ENCODE measurements at regions of chr12 and their contacts with region 1.

Region 1: DNA sequence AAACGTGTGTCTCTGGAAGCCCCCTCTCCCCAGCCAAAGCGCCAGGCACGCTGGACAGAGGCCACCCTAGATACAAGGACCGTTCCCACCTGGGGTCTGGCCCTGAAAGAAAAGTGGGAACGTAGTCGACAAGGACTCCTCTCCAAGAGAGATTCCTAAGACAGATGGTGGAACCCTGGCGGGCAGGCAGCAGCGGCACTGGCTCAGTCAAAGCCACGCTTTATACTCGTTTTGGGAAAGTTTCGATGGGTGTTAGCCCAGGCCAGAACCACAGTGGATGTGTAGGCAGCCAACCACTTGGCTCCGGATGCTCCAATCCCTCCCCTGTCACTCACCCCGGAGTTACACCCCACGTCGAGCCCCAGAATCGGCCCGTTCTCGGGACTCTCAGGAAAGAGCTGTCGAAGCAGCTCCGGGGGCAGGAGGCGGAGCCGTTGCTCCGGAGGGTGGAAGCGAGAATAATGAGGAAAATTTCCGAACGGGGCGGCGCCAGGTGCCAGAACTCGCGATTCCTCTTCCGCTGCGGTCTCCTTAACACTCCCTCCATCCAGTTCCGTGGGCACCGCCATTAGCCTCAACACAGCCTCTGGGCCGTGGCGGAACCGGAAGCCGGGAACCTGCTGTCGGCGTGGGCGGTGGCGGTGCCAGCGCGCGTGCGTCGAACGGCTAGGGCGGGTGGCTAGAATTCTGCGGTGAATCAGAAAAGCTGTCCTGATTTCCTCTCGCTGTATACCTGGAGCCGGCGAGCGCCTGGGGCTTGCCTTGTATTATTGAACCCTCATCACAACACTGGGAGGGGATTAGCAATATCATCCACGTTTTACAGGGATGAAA is at the start of gene BCDIN3D:
- DNase-seq: peak; percentile 88
- ATAC-seq: peak; percentile 90
- H3K4me3 Mint-ChIP-seq: peak within 1 kb of the TSS; percentile 93
- H3K27ac Mint-ChIP-seq: peak within 1 kb of the TSS; percentile 90
- H3K4me1 Mint-ChIP-seq: peaks cover 34% of the 10 kb centered on the region
- H3K27me3 Mint-ChIP-seq: no peaks in the 10 kb centered on the region
- CTCF ChIP-seq: no peak
- total RNA-seq, gene BCDIN3D: 10.4 and 12.0 TPM in 2 replicates

Region 2: DNA sequence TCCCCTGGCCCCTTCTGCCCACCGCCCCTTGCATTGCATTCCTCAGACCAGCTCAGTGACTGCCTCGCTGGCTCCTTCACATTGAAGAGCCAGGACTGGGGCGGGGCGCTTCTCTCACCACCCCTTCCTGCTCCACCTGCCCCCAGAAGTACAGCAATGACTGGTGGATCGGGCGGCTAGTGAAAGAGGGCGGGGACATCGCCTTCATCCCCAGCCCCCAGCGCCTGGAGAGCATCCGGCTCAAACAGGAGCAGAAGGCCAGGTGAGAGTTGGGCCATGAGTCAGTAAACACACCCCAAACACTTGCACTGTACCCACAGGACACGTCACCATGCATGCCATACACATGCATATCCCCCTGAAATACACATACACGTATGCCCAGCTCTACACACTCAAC is 1018.6 kb before region 1 on chr12:
- CTCF ChIA-PET with region 1: no interaction called
- POLR2A ChIA-PET with region 1: no interaction called
- intact Hi-C with region 1: no loop called
- DNase-seq: no peak
- ATAC-seq: peak; percentile 42
- H3K4me3 Mint-ChIP-seq: no peak overlapping the region
- H3K27ac Mint-ChIP-seq: no peak overlapping the region
- H3K4me1 Mint-ChIP-seq: peaks cover under 1% of the 10 kb centered on the region
- H3K27me3 Mint-ChIP-seq: no peaks in the 10 kb centered on the region
- CTCF ChIP-seq: no peak

Region 3: GRCh38 chr12:49636979-49637755 is 205.6 kb before region 1 on chr12:
- CTCF ChIA-PET with region 1: interaction called, 8 read pairs
- POLR2A ChIA-PET with region 1: no interaction called
- intact Hi-C with region 1: loop called (anchors 2 kb)
- DNase-seq: peak; percentile 22
- ATAC-seq: peak; percentile 94
- H3K4me3 Mint-ChIP-seq: no peak overlapping the region
- H3K27ac Mint-ChIP-seq: peak overlapping the region; percentile 22
- H3K4me1 Mint-ChIP-seq: peaks cover 27% of the 10 kb centered on the region
- H3K27me3 Mint-ChIP-seq: no peaks in the 10 kb centered on the region
- CTCF ChIP-seq: no peak

Region 4: DNA sequence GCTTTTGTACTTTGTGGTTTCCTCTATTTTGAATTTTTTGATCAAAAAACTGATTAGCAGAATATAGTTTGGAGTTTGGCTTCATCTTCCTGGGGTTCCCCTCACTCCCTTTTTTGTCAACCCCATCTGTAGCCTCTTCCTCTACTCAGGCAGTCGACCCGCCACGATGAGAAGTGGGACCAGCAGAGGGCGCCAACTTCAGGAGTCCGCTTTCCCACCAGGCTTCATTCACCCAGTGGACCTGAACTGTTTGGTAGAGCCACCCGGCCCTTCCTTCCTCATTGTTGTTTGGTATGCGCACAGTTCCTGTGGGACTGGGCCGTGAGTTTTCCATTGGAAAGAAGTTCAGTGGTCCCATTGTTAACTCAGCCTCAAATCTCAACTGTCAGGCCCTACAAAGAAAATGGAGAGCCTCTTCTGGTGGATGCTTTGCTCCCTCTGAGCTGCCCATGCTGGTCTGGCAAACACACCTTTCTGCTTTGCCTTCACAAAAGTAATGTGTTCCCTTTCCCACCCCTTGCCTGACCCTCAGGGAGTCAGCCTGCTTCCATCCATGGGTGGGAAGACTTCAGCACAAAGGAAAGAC is 79.6 kb before region 1 on chr12:
- CTCF ChIA-PET with region 1: interaction called, 21 read pairs
- POLR2A ChIA-PET with region 1: interaction called, 3 read pairs
- intact Hi-C with region 1: loop called (anchors 1 kb)
- DNase-seq: peak; percentile 59
- ATAC-seq: peak; percentile 83
- H3K4me3 Mint-ChIP-seq: no peak overlapping the region
- H3K27ac Mint-ChIP-seq: peak overlapping the region; percentile 79
- H3K4me1 Mint-ChIP-seq: peaks cover 25% of the 10 kb centered on the region
- H3K27me3 Mint-ChIP-seq: no peaks in the 10 kb centered on the region
- CTCF ChIP-seq: no peak

Region 5: GRCh38 chr12:49828133-49829091 is 14.3 kb before region 1 on chr12 and contains the start of gene NCKAP5L:
- CTCF ChIA-PET with region 1: interaction called, 19 read pairs
- POLR2A ChIA-PET with region 1: interaction called, 19 read pairs
- intact Hi-C with region 1: loop called (anchors 1 kb)
- DNase-seq: peak; percentile 87
- ATAC-seq: peak; percentile 97
- H3K4me3 Mint-ChIP-seq: peak within 1 kb of the TSS; percentile 98
- H3K27ac Mint-ChIP-seq: peak within 1 kb of the TSS; percentile 95
- H3K4me1 Mint-ChIP-seq: peaks cover 37% of the 10 kb centered on the region
- H3K27me3 Mint-ChIP-seq: no peaks in the 10 kb centered on the region
- CTCF ChIP-seq: no peak
- total RNA-seq, gene NCKAP5L: 7.2 and 9.1 TPM in 2 replicates

Region 6: GRCh38 chr12:50167041-50167828 is 324.5 kb after region 1 on chr12 and contains the start of gene CERS5:
- CTCF ChIA-PET with region 1: no interaction called
- POLR2A ChIA-PET with region 1: interaction called, 5 read pairs
- intact Hi-C with region 1: loop called (anchors 2 kb)
- DNase-seq: peak; percentile 95
- ATAC-seq: peak; percentile 98
- H3K4me3 Mint-ChIP-seq: peak within 1 kb of the TSS; percentile 92
- H3K27ac Mint-ChIP-seq: peak within 1 kb of the TSS; percentile 90
- H3K4me1 Mint-ChIP-seq: peaks cover 25% of the 10 kb centered on the region
- H3K27me3 Mint-ChIP-seq: no peaks in the 10 kb centered on the region
- CTCF ChIP-seq: no peak
- total RNA-seq, gene CERS5: 44.3 and 64.9 TPM in 2 replicates